Posterior vena cava (tissue), 2 donors: ENCODE measurements at regions of chr11 and their contacts with region 1.

Region 1: GRCh38 chr11:10933455-10934292 is 75.8 kb upstream of the ZBED5 start:
- DNase-seq: peak; percentile 96

Region 2: DNA sequence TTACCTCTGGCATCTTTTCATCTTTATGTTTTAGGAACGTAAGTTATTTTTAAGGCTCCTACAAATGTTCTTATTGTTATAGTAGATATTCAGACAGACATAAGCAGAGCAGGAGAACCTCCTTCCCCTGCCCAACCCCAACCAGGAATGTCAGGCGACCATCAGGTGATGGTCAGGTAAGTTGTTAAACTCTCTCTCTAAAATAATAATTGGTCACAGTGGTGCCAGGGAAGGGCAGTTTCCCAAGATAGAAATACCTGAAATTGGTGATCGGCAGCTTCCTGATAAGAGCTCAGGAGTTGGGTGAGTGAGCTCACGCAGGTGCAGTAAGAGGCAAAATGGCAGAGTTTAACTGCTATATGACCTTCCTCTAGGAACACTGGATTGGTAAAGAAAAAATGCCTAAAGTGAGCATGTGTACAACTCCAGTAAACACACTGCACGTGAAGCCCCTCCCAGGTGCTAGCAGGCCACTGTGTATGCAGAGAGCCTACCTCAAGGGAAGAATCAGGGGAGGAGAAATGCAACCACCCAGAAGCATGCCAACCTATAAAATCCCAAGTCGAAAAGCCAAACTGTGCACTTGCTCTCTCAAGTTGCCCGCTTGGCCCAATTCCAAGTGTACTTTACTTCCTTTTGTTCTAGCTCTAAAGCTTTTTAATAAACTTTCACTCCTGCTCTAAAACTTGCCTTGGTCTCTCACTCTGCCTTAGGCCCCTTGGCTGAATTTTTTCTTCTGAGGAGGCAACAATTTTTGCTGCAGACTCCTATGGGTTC is 913.6 kb before region 1 on chr11:
- intact Hi-C with region 1: no loop called
- DNase-seq: no peak

Region 3: DNA sequence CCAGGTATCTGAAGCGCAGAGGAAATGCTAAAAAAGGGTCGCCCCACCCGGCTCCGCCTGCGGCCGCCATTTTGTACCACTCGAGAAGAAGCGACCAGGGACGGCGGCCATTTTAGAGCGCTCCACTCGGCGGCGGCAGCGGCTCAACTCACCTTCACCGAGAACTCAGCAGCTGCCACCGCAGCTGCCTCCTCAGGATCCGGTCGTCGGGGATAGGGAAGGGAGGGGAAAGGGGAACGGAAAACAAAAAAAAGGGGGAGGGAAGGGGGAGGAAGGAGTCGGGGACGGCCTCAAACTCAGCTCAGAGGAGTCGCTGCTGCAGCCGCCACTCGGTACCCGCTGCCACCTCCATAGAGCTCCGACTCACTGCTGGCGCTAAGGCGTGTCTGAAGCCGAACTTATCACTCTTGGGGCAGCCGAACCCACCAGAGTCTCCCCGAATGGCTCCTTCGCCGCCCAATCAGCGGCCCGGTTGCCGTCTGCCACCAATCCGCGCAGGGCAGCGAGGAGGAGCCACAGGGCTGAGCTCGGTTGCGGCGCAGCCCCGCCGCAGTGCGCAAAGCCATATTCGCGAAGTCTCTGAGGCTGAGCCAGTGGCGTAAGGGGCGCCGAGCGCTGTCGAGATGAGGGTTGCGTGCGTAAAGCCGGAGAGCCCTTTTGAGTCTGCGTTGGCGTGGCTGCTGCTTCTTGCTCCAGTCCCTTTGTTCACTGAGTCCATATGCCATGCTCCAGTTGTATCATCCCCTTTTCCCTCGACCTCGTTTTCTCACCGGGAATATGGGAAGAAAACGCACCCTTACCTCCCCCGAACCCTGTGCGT is 124.9 kb before region 1 on chr11 and contains the start of gene EIF4G2:
- intact Hi-C with region 1: loop called in 1 of 2 experiments (anchors 5 kb)
- DNase-seq: peak; percentile 99
- total RNA-seq, gene EIF4G2: 885 to 1,062 TPM

Region 4: GRCh38 chr11:11022125-11022730 is 88.6 kb after region 1 on chr11:
- intact Hi-C with region 1: loop called (anchors 5 kb)
- DNase-seq: no peak